ENCODE measurements at regions of chrX and their contacts with region 1.

Region 1: DNA sequence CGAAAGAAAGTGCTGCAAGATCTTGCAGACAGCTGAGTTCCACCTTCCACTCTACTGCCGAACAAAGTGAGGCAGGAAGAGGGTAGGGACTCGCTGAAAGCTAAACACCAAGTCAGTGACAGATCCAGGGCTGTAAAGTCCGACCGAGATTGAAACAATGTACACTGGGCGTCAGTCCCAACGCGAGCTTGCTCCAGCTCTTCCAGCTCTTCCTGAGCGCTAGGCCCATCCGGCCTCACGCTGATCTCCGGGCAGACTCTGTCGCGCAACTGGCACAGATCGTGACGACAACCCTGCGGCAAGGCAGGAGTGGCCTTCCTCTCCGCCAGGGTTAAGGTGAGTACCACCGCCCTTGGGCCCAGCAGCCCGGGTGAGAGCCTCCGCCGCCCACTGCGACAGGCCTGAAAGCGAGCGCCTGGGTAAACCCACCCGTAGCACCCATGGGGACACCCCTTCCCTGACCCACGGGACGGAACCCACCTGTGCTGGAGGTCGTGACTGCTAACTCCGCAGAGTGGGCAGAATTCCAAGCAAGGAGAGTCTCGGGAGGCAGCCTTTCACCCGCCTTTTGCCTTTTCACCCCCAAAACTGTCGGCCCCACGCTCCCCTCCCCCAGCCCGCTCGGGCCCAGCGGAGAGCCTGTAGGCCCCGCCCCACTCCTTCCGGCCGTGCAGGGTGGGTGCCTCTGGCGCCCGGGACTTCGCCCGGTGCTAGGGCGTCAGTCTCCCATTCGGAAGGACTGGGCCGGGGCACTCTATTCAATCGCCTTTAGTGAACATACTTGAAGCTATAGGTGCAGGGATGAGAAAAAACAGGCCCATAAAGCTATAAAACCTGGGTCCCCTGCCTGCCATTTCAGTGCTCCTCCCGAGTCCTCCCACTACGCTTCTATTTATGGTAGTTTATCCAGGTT is at the start of gene TMLHE:
- DNase-seq: peak; percentile 11 to 40
- ATAC-seq: peak; percentile 88 to 91
- H3K4me3 ChIP-seq: peak within 1 kb of the TSS; percentile 72 to 83 (median 79)
- H3K27ac ChIP-seq: peak within 1 kb of the TSS; percentile 88 to 96 (median 91)
- H3K4me1 ChIP-seq: peaks cover 4 to 8% of the 10 kb centered on the region in 2 donors
- H3K27me3 ChIP-seq: no peaks in the 10 kb centered on the region
- CTCF ChIP-seq: no peak
- POLR2A ChIP-seq: no peak
- total RNA-seq, gene TMLHE: 13.7 to 25.7 (median 17.4) TPM

Region 2: DNA sequence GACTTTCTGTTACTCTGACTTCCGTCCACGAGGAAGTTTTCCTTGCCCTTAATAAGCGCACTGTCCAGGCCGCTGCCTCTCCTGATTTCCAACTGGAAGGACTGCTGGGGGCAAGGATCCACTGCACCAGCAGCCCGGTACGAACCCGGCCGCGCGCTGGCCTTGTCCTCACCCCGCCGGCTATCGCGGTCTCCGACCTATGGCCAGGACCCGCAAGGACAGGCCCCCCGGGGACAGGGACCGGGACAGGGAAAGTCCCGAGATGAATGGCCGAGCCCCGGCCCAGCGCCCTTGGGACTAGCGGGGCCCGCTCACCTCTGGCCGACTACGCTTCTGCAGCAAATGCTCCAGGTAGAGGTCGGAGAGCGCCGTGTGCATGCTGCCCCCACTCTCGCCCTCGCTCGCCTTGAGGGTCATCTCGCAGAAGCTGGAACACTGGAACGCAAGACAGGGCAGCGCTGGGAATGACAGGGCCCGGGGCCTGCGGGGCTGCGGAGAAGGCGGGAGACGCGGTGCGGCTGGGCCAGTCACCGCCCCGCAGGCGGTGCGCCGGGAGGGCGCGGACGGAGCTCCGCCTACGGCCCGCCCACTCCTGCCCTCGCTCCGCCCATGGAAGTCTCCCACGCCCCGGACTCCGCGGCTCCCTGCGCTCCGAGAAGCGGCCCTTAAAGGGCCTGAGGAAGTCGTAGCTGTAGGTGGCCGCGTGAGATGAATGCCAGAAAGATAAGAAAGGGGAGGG is 807.4 kb before region 1 on chrX and contains the start of gene MPP1:
- in situ Hi-C with region 1: no loop called
- intact Hi-C with region 1: loop called (anchors 10 kb)
- DNase-seq: peak; percentile 41 to 64
- ATAC-seq: peak; percentile 87 to 88
- H3K4me3 ChIP-seq: peak within 1 kb of the TSS; percentile 68 to 92 (median 69)
- H3K27ac ChIP-seq: peak within 1 kb of the TSS; percentile 61 to 83 (median 80)
- H3K4me1 ChIP-seq: peaks cover 0 to 12% of the 10 kb centered on the region in 2 donors
- H3K27me3 ChIP-seq: no peaks in the 10 kb centered on the region
- CTCF ChIP-seq: no peak
- POLR2A ChIP-seq: peak in 1 of 2 donors; percentile 41
- total RNA-seq, gene MPP1: 11.3 to 19.9 (median 15.9) TPM

Measured in gastrocnemius medialis (tissue), 4 donors.